Activated naive CD4-positive, alpha-beta T cell treated with anti-CD3 and anti-CD28 coated beads for 36 hours (primary cell): ENCODE measurements at regions of chr17 and their contacts with region 1.

Region 1: DNA sequence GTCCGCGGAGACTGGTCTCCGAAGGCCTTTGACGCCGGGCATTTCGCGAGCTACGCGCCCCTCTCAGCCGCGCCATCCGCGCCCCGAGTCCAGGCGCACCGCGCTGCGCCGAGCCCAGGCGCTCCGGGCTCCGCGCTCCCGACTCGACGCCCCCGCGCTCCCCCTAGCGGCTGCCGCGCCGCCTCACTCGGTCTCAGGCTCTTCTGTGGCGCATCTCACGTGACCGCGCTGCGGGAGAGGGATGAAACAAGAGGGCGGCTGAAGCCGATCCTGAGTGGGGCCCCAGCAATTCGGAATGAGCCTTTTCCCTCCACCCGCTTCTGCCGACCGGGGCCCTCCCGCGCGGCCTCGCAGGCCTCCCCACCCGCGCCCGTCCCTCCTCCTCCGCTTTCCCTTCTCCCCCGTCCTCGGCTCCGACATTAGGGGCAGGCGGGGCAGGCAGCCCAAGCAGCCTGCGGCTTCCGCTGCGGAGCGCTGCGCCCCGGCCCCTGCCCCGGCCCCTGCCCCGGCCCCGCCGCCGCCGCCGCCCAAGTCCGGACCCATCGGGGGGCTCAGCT is 42.5 kb upstream of the AMZ2 start:
- DNase-seq: peak; percentile 93
- H3K4me3 Mint-ChIP-seq: peak overlapping the region; percentile 87
- H3K27ac Mint-ChIP-seq: peak overlapping the region; percentile 79
- H3K4me1 Mint-ChIP-seq: peaks cover 12% of the 10 kb centered on the region
- H3K27me3 Mint-ChIP-seq: peaks cover 2% of the 10 kb centered on the region

Region 2: DNA sequence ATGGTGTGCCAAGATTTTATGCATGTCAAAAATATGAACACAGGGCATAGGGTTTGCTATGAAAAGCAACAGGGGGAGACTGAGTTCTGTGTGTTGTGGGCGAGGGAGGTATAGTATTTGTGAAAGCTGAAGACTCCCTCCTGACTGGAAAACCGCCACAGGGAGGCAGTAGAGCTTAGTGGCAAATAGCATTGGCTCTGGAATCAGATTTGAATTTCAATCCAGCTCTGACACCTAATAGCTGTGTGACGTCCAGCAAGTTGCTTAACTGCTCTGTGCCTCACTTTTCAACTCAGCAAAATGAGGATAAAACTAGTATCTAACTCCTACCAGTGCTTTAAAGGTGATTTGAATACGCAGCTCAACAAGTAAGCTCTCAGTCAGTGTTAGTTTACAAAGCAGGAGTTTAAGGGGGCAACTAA is 147.8 kb before region 1 on chr17:
- CTCF ChIA-PET with region 1: interaction called, 3 read pairs
- intact Hi-C with region 1: loop called (anchors 1 kb)
- DNase-seq: peak; percentile 69
- H3K4me3 Mint-ChIP-seq: no peak overlapping the region
- H3K27ac Mint-ChIP-seq: no peak overlapping the region
- H3K4me1 Mint-ChIP-seq: peaks cover 16% of the 10 kb centered on the region
- H3K27me3 Mint-ChIP-seq: peaks cover 2% of the 10 kb centered on the region

Region 3: DNA sequence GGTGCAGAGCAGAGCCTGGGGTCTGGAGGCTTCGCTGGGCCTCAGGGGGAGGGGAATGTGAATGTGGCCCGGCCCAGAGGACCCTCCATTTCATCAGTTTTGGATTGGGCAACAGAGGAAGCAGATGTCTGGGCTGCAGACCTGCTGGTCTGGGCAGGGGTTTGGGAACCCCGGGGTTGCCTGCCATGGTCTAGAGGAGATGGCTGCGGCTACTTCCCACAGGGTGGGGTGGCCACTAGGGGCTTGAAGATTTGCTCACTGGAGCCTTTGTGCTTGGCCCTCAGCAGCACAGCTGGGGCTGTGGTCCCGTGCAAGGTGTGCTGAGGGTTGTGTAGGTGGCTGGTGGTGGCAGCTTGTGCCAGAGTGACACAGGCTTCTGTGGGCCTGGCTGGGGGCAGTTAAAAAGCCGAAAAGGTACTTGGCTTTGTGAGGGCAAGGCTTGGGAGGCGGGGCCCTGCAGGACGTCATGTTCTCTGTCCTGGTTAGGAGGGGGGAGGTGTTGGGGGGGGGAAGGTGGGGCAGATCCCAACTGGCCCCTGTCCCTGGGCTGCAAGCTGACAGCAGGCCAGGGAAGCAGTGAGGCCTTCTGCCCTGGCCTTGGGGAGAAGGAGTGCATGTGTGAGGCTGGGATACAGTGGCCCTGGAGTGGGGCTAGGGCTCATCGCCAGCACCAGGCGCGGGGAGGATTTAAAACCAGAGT is 71.8 kb before region 1 on chr17:
- CTCF ChIA-PET with region 1: no interaction called
- intact Hi-C with region 1: no loop called
- DNase-seq: no peak
- H3K4me3 Mint-ChIP-seq: no peak overlapping the region
- H3K27ac Mint-ChIP-seq: no peak overlapping the region
- H3K4me1 Mint-ChIP-seq: no peaks in the 10 kb centered on the region
- H3K27me3 Mint-ChIP-seq: no peaks in the 10 kb centered on the region

Region 4: GRCh38 chr17:68172461-68172954 is 32.8 kb before region 1 on chr17:
- CTCF ChIA-PET with region 1: interaction called, 55 read pairs
- intact Hi-C with region 1: loop called (anchors 1 kb)
- DNase-seq: peak; percentile 86
- H3K4me3 Mint-ChIP-seq: no peak overlapping the region
- H3K27ac Mint-ChIP-seq: no peak overlapping the region
- H3K4me1 Mint-ChIP-seq: peaks cover 15% of the 10 kb centered on the region
- H3K27me3 Mint-ChIP-seq: no peaks in the 10 kb centered on the region

Region 5: GRCh38 chr17:68238164-68238872 is 33.0 kb after region 1 on chr17:
- CTCF ChIA-PET with region 1: interaction called, 6 read pairs
- intact Hi-C with region 1: loop called (anchors 1 kb)
- DNase-seq: no peak
- H3K4me3 Mint-ChIP-seq: peak overlapping the region; percentile 74
- H3K27ac Mint-ChIP-seq: peak overlapping the region; percentile 94
- H3K4me1 Mint-ChIP-seq: peaks cover 54% of the 10 kb centered on the region
- H3K27me3 Mint-ChIP-seq: no peaks in the 10 kb centered on the region

Region 6: DNA sequence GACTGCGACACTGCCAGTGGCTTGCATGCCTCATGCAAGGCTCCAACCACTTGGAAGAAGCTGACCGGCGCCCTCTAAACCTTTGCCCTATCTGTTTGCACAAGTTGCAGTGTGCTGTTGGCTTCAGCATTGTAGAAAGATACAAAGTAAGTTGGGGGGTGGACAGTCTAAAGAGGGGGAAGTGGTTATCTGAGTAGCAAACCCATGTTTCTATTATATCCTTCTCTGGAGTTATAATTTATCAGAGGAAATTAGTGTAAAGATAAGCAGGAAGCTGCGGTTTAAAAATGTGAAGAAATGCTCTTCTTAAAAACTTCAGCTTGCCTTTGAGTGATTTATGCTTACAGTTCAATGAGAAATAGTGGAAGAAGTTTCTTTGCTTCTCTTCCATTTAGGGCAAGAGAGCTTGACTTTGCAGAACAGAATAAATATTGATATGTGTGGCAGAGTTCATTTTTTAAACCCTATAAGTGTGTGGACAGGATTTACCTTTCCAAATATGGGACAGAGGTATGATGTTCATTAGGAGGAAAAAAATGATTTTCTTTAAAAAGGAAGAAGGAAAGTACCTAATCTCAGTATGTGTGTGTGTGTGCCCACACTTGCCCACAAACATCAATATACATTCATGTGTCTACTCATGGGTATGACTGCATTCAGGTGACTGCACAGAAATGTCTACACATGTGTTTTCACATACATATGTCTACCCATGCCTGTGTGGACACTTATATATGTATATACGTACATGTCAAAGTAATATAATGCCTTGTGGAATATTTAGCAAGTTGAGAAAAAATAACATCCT is 50.6 kb after region 1 on chr17:
- CTCF ChIA-PET with region 1: interaction called, 7 read pairs
- intact Hi-C with region 1: loop called (anchors 1 kb)
- DNase-seq: peak; percentile 54
- H3K4me3 Mint-ChIP-seq: no peak overlapping the region
- H3K27ac Mint-ChIP-seq: peak overlapping the region; percentile 92
- H3K4me1 Mint-ChIP-seq: peaks cover 76% of the 10 kb centered on the region
- H3K27me3 Mint-ChIP-seq: no peaks in the 10 kb centered on the region

Region 7: DNA sequence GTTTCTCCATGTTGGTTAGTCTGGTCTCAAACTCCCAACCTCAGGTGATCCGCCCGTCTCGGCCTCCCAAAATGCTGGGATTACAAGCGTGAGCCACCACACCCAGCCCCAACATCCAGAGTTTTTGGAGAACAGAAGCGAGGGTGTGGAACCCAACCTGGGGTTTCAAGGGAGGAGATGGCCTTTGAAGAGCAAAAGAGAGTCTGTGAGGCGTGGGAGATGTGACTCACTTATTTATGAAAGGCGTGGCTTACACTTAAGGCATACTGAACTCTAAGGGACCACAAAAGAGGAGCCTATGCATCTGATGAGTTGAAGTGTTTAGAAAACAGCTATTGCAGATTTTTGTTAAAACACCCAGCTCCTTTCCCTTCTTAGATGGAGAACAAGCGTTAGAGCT is 104.8 kb after region 1 on chr17:
- CTCF ChIA-PET with region 1: no interaction called
- intact Hi-C with region 1: no loop called
- DNase-seq: peak; percentile 65
- H3K4me3 Mint-ChIP-seq: no peak overlapping the region
- H3K27ac Mint-ChIP-seq: no peak overlapping the region
- H3K4me1 Mint-ChIP-seq: peaks cover 46% of the 10 kb centered on the region
- H3K27me3 Mint-ChIP-seq: no peaks in the 10 kb centered on the region

Region 8: DNA sequence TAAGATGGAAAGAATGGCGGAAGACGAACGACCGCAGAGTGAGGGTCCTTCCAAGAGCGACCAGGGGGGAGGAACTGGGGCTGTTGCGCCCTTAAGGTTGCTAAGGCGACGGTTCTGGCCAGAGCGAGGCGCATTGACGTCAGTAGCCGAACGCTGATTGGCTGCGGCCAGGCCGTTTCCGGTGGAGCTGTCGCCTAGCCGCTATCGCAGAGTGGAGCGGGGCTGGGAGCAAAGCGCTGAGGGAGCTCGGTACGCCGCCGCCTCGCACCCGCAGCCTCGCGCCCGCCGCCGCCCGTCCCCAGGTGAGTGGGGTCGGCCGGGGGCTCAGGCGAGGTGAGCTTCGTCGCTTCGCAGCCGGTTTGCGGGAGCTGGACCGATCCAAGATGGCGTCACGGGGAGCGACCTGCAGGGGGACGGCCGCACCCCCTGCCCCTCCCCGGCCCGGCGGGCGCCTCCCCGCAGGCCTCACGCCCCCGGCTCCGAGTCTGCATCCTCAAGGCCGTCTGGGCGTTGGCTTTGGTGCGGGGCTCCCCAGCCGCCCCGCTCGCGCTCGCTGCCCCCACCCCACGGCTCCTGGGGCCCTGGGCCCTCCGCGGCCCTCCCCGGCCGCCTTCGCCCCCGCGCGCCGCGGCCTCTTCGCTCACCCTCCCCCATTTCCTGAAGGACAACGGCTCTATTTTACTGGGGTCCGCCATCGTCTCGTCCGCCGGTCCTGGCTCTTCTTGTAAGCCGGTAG is 307.1 kb after region 1 on chr17 and contains the start of gene PRKAR1A:
- CTCF ChIA-PET with region 1: no interaction called
- intact Hi-C with region 1: loop called (anchors 5 kb)
- DNase-seq: peak; percentile 95
- H3K4me3 Mint-ChIP-seq: peak within 1 kb of the TSS; percentile 99
- H3K27ac Mint-ChIP-seq: peak within 1 kb of the TSS; percentile 99
- H3K4me1 Mint-ChIP-seq: peaks cover 41% of the 10 kb centered on the region
- H3K27me3 Mint-ChIP-seq: no peaks in the 10 kb centered on the region
- total RNA-seq, gene PRKAR1A: 151 TPM

Region 9: DNA sequence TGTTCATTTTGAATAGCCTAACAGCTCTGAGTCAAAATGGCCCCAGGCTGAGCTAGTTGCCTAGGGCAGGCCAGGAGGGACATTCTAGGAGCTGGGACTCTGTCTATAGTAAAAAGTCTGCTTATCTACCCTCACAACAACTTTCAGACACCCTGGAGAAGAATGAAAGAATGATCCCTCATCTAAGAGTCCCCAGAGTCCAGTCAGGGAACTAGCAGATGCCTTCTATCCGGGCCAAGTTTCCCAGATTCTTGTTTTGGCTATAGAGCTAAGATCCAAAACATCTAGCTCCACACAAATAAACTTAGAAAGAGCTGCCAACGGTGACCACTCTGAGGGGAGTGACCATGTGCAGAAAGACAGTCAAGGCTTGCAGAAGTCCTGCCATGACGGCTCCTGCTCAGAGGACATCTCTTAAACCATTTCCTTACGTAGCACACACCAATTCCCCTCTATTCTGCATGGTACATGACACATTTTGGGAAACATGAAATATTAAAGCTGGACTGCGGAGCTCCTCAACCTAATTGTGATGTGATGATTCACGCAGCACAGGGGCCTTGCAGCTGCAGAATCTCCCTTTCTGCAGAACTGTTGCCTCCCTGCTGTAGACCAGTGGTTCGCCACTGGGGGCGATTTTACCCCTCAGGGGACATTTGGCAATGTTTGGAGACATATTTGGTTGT is 371.6 kb after region 1 on chr17:
- CTCF ChIA-PET with region 1: no interaction called
- intact Hi-C with region 1: no loop called
- DNase-seq: no peak
- H3K4me3 Mint-ChIP-seq: no peak overlapping the region
- H3K27ac Mint-ChIP-seq: no peak overlapping the region
- H3K4me1 Mint-ChIP-seq: no peaks in the 10 kb centered on the region
- H3K27me3 Mint-ChIP-seq: no peaks in the 10 kb centered on the region